CD4-positive, alpha-beta T cell (primary cell): ENCODE measurements at regions of chr10 and their contacts with region 1.

Region 1: DNA sequence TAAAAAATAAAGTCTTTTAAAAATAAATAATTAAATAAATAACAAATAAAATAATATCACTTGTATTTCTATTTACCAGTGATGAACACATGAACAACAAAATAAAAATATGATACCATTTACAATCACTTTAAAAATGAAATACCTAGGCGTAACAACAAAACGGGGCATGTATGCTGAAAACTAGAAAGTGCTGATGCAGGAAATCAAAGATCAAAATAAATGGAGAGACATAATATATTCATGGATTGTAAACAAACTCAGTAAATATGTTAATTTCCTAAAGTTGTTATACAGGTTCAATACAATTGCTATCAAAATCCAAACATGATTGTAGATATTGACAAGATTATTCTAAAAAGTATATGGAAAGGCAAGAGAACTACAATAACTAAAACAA is 19.2 kb upstream of the SFTPA2 start:
- DNase-seq: no peak
- ATAC-seq: no peak
- H3K4me3 ChIP-seq: no peak overlapping the region
- H3K4me3 Mint-ChIP-seq: no peak overlapping the region
- H3K27ac ChIP-seq: no peak overlapping the region
- H3K27ac Mint-ChIP-seq: no peak overlapping the region
- H3K4me1 ChIP-seq: no peaks in the 10 kb centered on the region
- H3K4me1 Mint-ChIP-seq: no peaks in the 10 kb centered on the region
- H3K27me3 ChIP-seq: no peaks in the 10 kb centered on the region
- H3K27me3 Mint-ChIP-seq: peaks cover 14% of the 10 kb centered on the region
- CTCF ChIP-seq: no peak

Region 2: DNA sequence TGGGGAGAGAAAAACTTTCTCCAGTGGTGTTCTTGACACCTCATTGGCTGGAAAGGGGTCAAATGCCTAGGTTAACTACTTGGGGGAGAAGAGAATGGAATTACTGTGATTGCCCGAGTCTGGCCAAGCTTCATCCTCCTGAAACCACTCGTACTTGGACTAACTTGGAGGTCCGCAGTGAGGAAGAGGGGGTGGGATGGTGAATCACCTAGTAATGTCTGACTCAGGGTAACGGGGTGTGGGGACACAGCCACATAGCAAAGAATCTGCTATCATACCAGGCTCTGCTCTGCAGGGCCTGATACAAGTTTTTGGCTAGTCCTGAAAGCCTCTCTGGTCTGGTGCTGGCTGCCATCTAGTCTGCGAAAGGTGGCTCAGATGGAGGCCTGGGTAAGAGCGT is 1354.8 kb before region 1 on chr10:
- CTCF ChIA-PET with region 1: no interaction called
- POLR2A ChIA-PET with region 1: no interaction called
- intact Hi-C with region 1: loop called in 1 of 2 experiments (anchors 10 kb)
- DNase-seq: no peak
- ATAC-seq: no peak
- H3K4me3 ChIP-seq: no peak overlapping the region
- H3K4me3 Mint-ChIP-seq: no peak overlapping the region
- H3K27ac ChIP-seq: no peak overlapping the region
- H3K27ac Mint-ChIP-seq: no peak overlapping the region
- H3K4me1 ChIP-seq: no peaks in the 10 kb centered on the region
- H3K4me1 Mint-ChIP-seq: no peaks in the 10 kb centered on the region
- H3K27me3 ChIP-seq: peaks cover 0 to 2% of the 10 kb centered on the region in 2 experiments
- H3K27me3 Mint-ChIP-seq: peaks cover 15% of the 10 kb centered on the region
- CTCF ChIP-seq: no peak